GM23248 (cell line): ENCODE measurements at regions of chr2 and their contacts with region 1.

Region 1: GRCh38 chr2:230007931-230008707 is 60.6 kb downstream of the SLC16A14 start:
- DNase-seq: peak; percentile 78
- H3K4me3 ChIP-seq: peak overlapping the region; percentile 34; the same call in 1 of the 2 replicates
- H3K27ac ChIP-seq: no peak overlapping the region
- H3K4me1 ChIP-seq: peaks cover 17% of the 10 kb centered on the region
- H3K27me3 ChIP-seq: no peaks in the 10 kb centered on the region

Region 2: GRCh38 chr2:229431327-229431954 is 576.7 kb before region 1 on chr2:
- in situ Hi-C with region 1: no loop called
- DNase-seq: peak; percentile 72
- H3K4me3 ChIP-seq: no peak overlapping the region
- H3K27ac ChIP-seq: no peak overlapping the region
- H3K4me1 ChIP-seq: no peaks in the 10 kb centered on the region
- H3K27me3 ChIP-seq: no peaks in the 10 kb centered on the region

Region 3: GRCh38 chr2:230160112-230160660 is 152.1 kb after region 1 on chr2:
- in situ Hi-C with region 1: loop called (anchors 5 kb)
- DNase-seq: peak; percentile 70
- H3K4me3 ChIP-seq: no peak overlapping the region
- H3K27ac ChIP-seq: no peak overlapping the region
- H3K4me1 ChIP-seq: no peaks in the 10 kb centered on the region
- H3K27me3 ChIP-seq: no peaks in the 10 kb centered on the region

Region 4: DNA sequence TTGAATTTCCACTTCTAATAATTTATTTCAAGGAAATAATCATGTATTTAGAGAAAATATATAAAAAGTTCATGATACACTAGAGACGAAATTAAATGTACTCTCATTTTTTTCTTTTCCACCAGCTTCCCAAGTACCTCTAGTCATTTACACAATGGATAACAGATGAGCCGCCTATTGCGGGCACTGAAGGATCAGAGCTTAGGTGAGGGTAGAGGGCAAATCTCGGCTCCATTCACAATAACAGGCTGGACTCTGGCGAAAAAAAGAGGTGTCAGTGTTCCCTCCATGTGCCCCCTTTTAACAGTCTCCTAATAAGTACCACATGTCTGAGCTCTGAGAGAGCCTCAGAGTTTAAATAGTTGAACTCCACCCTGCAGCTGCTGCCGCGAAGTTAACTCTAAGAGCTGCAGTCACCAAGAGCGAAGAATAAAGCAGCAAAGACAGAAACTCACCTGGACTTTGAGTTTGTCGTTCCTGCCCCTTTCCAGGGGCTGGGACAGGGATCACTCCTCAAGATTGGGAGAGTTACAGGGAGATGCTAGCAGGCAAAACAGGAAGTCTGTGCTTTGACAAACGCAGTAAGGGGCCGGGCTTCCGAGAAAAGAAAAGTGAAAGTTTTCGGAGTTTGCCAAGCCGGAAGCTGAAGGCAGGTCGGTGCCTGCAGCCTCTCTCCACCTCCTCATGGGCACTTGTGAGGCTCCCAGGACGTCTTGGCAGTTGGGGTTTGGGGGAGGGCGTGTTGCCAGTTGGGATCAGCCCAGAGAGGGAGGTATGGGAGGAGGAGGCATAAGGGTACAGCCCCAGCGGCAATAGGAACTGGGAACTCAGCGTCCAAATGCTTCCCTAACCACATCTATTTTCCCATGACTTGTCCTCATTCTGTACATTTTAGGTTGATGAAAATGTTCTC is 211.6 kb after region 1 on chr2 and contains the start of gene SP110:
- in situ Hi-C with region 1: no loop called
- DNase-seq: peak; percentile 88
- H3K4me3 ChIP-seq: peak within 1 kb of the TSS; percentile 99
- H3K27ac ChIP-seq: peak within 1 kb of the TSS; percentile 50
- H3K4me1 ChIP-seq: peaks cover 5% of the 10 kb centered on the region
- H3K27me3 ChIP-seq: no peaks in the 10 kb centered on the region
- total RNA-seq, gene SP110: 11.6 and 24.3 TPM in 2 replicates

Region 5: GRCh38 chr2:230824406-230824978 is 816.4 kb after region 1 on chr2:
- in situ Hi-C with region 1: loop called (anchors 25 kb)
- DNase-seq: peak; percentile 82
- H3K4me3 ChIP-seq: peak overlapping the region; percentile 62
- H3K27ac ChIP-seq: no peak overlapping the region
- H3K4me1 ChIP-seq: no peaks in the 10 kb centered on the region
- H3K27me3 ChIP-seq: peaks cover 14% of the 10 kb centered on the region